ENCODE measurements at regions of chr3 and their contacts with region 1.

Region 1: DNA sequence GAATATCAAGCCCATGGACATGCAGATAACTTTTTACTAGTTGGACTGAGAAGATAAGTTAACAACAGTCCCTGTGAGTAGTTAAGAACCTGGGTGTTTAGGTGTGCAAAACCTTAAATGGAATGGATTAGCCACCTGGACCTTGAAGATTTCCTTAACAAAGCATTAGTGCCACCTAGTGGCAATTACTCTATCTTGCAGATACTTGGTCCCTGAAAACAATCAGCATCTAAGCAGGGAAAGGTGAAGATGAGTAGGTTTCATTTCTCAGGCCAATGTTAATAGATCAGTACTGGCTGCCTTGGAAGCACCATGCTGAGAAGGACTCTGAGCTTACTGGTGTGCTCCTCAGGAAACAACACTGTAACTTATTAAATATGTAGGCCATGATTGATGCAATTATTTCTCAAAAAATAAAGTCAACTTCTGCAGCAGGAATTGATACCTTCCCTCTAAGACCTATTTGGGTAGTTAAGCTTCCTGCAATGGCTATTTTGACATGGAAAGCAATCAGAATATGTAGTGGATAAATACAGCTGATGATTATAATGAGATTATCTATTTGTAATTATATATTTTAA is 329.4 kb downstream of the TBC1D5 start:
- DNase-seq: peak; percentile 28
- CTCF ChIP-seq: peak; percentile 77

Region 2: DNA sequence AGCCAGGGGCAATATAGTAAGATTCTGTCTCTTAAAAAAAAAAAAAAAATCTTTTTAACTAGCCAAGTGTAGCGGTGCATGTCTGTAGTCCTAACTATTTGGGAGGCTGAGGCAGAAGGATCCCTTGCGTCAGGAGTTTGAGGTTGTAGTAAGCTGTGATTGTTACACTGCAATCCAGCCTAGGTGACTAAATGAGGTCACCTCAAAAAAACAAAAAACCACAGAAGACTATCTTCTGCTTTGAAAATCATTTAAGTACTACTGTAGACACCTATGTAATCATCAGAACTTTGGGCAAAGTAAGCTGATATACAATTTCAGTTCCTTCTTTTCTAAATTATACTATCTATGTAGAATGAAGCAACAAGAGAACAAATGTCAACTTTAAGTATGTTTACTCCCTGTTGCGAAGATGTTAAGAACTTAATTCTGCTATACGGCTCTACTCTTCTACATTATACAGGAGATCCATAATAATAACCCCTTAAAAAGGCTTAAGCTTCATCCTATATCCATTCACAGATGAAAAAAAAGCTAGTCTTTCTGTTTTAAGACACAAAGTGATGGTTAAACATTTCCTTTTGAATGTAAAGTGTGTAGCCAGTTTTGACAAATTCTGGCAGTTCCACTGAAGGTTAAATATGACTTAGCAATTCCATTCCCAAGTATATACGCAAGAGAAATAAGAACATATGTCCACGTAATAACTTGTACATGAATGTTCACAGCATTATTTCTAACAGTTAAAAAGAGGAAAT is 823.0 kb before region 1 on chr3:
- in situ Hi-C with region 1: loop called (anchors 10 kb)
- DNase-seq: peak; percentile 55
- CTCF ChIP-seq: no peak

Region 3: GRCh38 chr3:17258823-17259436 is 154.1 kb before region 1 on chr3:
- in situ Hi-C with region 1: loop called (anchors 10 kb)
- DNase-seq: peak; percentile 52
- CTCF ChIP-seq: peak; percentile 64

Region 4: DNA sequence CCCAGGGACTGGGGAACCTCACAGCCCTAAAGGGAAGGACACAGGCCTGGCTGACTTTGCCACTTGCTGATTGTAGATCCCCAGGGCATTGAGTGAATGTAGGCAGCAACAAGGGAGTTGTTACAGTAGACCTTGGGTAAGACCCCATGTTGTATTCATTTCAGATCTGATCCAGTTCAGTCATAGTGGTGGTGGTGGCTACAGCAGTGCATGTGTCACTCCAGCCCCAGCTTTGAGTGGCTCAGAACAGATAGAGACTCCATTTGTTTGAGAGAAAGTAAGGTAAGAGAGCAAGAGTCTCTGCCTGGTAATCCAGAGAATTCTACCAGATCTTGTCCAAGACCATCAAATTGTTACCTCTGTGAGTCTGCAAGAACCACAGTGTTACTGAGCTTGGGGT is 1290.8 kb after region 1 on chr3:
- in situ Hi-C with region 1: no loop called
- DNase-seq: no peak
- CTCF ChIP-seq: no peak